ENCODE measurements at regions of chr11 and their contacts with region 1.

Region 1: GRCh38 chr11:72091005-72091691 is 10.5 kb downstream of the LRRC51 start:
- DNase-seq: peak; percentile 82
- ATAC-seq: peak; percentile 97
- H3K4me3 Mint-ChIP-seq: no peak overlapping the region
- H3K27ac Mint-ChIP-seq: peak overlapping the region; percentile 75
- H3K4me1 Mint-ChIP-seq: peaks cover 5% of the 10 kb centered on the region
- H3K27me3 Mint-ChIP-seq: no peaks in the 10 kb centered on the region
- CTCF ChIP-seq: peak; percentile 80

Region 2: DNA sequence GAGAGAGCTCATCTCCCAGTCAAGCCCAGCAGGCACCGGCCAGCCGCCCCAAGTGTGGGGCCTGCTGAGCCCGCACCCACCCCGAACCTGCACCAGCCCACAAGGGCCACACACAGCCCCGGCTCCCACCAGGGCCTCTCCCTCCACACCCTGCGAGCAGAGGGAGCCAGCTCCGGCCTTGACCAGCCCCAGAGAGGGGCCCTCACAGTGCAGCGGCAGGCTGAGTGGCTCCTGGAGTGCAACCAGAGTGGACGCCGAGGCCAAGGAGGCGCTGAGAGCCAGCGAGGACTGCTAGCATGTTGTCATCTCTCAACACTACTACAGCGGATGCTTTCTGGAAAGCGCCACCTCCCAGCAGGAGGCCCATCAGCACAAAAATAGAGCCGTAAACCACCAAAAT is 247.3 kb before region 1 on chr11:
- CTCF ChIA-PET with region 1: no interaction called
- POLR2A ChIA-PET with region 1: no interaction called
- intact Hi-C with region 1: no loop called
- DNase-seq: no peak
- ATAC-seq: no peak
- H3K4me3 Mint-ChIP-seq: no peak overlapping the region
- H3K27ac Mint-ChIP-seq: no peak overlapping the region
- H3K4me1 Mint-ChIP-seq: no peaks in the 10 kb centered on the region
- H3K27me3 Mint-ChIP-seq: no peaks in the 10 kb centered on the region
- CTCF ChIP-seq: no peak

Region 3: DNA sequence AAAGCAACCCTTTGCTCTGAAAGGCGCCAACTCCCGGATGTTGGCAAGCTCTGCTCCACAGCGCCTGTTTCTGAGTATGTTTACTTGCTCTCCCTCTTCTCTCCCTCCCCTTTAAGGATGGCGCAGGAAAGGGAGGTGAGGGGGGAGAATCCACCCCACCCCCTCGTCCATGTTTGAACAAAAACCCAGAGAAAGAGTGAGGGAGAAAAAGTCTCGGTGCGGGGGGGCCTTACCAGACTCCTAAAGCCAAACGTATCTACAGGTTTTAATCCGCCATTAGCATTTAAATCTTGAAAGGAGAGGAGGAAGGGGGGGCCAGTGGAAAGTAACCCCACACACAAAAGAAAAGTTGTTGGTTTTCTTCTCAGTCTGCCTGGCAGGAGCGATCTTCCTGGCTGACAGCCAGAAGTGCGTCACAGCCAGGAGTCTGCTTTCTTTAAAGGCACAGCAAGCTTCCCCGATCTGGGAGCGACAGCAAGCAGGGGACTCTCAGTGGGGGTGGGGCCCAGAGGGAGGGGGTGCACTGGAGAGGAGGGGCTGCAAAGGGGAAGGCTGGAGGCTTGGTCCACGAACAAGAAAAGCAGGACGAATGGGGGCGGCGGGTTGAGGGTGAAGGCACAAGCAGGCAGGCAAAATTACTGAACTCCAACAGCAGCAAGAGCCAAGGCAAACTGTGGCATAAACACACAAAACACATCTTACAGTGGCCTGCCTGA is 50.3 kb before region 1 on chr11:
- CTCF ChIA-PET with region 1: interaction called, 22 read pairs
- POLR2A ChIA-PET with region 1: interaction called, 5 read pairs
- intact Hi-C with region 1: no loop called
- DNase-seq: peak; percentile 79
- ATAC-seq: peak; percentile 72
- H3K4me3 Mint-ChIP-seq: no peak overlapping the region
- H3K27ac Mint-ChIP-seq: no peak overlapping the region
- H3K4me1 Mint-ChIP-seq: peaks cover 32% of the 10 kb centered on the region
- H3K27me3 Mint-ChIP-seq: no peaks in the 10 kb centered on the region
- CTCF ChIP-seq: no peak

Region 4: DNA sequence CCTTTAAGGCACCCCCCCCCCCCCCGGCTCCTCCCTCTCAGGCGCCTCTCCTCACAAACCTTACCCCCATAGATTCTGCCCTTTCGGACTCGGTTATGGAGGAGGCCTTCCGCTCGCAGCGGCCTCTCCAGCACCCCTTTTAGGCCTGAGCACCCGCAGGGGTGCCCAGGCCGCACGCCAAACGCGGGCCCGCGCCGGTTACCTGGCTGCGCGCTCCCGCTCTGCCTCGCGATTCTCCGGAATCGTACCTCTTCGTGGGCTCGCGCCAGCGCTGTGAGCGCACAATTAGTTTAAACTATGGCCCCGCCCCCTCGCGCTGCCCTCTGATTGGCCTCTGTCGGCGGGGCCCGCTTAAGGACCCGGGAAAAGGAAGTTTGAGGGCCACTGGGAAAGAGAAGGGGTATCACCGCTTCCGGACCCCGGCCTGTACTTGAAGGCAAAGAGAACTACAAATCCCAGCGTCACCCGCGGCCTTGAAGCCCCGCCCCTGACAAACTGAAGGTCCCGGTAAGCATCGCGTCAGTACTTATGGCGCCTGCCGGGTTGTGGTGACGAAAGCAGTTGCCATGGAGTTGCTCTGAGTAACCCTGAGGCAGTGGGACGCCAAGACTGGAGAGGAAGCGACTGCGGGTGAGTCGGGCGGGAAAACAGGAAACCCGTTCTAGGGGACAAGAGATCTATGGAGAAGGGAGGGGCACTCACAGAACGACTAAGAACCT is 10.7 kb before region 1 on chr11 and contains the starts of genes LRRC51 and NUMA1:
- CTCF ChIA-PET with region 1: interaction called, 20 read pairs
- POLR2A ChIA-PET with region 1: interaction called, 5 read pairs
- intact Hi-C with region 1: no loop called
- DNase-seq: peak; percentile 100
- ATAC-seq: peak; percentile 93
- H3K4me3 Mint-ChIP-seq: peak within 1 kb of the TSS; percentile 99
- H3K27ac Mint-ChIP-seq: peak within 1 kb of the TSS; percentile 99
- H3K4me1 Mint-ChIP-seq: peaks cover 34% of the 10 kb centered on the region
- H3K27me3 Mint-ChIP-seq: no peaks in the 10 kb centered on the region
- CTCF ChIP-seq: no peak
- total RNA-seq, gene LRRC51: 7.0 to 7.7 TPM
- total RNA-seq, gene NUMA1: 165 to 169 TPM

Region 5: DNA sequence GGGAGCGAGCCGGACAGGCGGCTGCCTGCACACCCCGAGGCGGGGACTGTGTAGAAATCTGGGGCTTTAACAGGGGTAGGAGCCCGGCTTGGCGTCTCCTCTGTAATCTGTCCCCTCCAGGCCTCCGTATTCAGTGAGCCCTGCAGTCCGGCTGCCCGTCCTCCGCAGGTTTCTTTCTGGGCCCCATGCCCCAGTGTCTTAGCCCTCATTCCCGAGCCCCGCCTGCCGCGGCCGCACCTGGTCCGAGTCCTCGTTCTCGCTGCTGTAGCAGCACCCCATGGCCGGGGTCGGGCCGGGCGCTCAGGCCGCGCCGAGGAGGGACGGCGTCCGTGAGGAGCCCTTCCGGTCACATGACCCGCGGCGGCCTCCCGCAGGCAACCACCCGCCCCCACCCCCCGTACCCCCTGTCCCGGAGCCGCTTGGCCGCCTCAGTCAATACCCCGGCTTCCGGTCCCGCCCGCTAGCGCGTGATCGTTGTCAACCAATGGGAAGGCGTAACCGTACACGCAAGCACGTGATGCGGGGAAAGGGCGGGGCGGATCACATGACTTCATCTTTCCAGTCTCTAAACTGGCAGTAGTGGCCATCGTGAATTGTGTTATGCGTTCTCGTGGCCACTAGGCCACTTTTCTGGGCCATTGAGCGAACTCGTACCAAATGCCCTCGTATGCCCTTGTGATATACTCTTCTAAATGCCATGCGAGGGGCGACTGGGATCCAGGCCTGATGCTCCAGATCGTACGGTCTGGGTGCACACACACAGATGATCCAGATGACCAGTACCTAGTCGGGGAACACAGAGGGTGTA is 12.0 kb after region 1 on chr11 and contains the start of gene LAMTOR1:
- CTCF ChIA-PET with region 1: interaction called, 41 read pairs
- POLR2A ChIA-PET with region 1: interaction called, 6 read pairs
- intact Hi-C with region 1: no loop called
- DNase-seq: peak; percentile 100
- ATAC-seq: peak; percentile 97
- H3K4me3 Mint-ChIP-seq: peak within 1 kb of the TSS; percentile 95
- H3K27ac Mint-ChIP-seq: peak within 1 kb of the TSS; percentile 96
- H3K4me1 Mint-ChIP-seq: peaks cover 37% of the 10 kb centered on the region
- H3K27me3 Mint-ChIP-seq: no peaks in the 10 kb centered on the region
- CTCF ChIP-seq: no peak
- total RNA-seq, gene LAMTOR1: 50.3 to 52.4 TPM

Measured in activated CD8-positive, alpha-beta T cell treated with anti-CD3 and anti-CD28 coated beads for 36 hours (primary cell).